Esophagus muscularis mucosa (tissue), 4 donors: ENCODE measurements at regions of chr19 and their contacts with region 1.

Region 1: GRCh38 chr19:46753420-46754155 is 7.3 kb upstream of the STRN4 start:
- DNase-seq: no peak
- H3K4me3 ChIP-seq: no peak overlapping the region
- H3K27ac ChIP-seq: peak overlapping the region in 1 of 4 donors; percentile 81
- H3K4me1 ChIP-seq: peaks cover 0 to 42% (median 30%) of the 10 kb centered on the region in 4 donors
- H3K27me3 ChIP-seq: no peaks in the 10 kb centered on the region
- CTCF ChIP-seq: peak in 2 of 3 experiments; percentile 37 to 43
- EP300 ChIP-seq: no peak
- POLR2A ChIP-seq: no peak

Region 2: GRCh38 chr19:46564701-46565100 is 188.9 kb before region 1 on chr19:
- intact Hi-C with region 1: no loop called
- DNase-seq: no peak
- H3K4me3 ChIP-seq: no peak overlapping the region
- H3K27ac ChIP-seq: no peak overlapping the region
- H3K4me1 ChIP-seq: no peaks in the 10 kb centered on the region
- H3K27me3 ChIP-seq: no peaks in the 10 kb centered on the region
- CTCF ChIP-seq: no peak
- EP300 ChIP-seq: no peak
- POLR2A ChIP-seq: no peak

Region 3: GRCh38 chr19:46990991-46991676 is 237.5 kb after region 1 on chr19:
- intact Hi-C with region 1: loop called (anchors 10 kb)
- DNase-seq: peak; percentile 94
- H3K4me3 ChIP-seq: no peak overlapping the region
- H3K27ac ChIP-seq: peak overlapping the region; percentile 45 to 77 (median 52)
- H3K4me1 ChIP-seq: peaks cover 20 to 51% (median 25%) of the 10 kb centered on the region in 4 donors
- H3K27me3 ChIP-seq: no peaks in the 10 kb centered on the region
- CTCF ChIP-seq: peak; percentile 87 to 92 (median 88)
- EP300 ChIP-seq: no peak
- POLR2A ChIP-seq: no peak